Gastrocnemius medialis (tissue), 4 donors: ENCODE measurements at regions of chr10 and their contacts with region 1.

Region 1: GRCh38 chr10:16777473-16778370 is 39.5 kb downstream of the RSU1 start:
- DNase-seq: no peak
- ATAC-seq: peak; percentile 19 to 44
- H3K4me3 ChIP-seq: no peak overlapping the region
- H3K27ac ChIP-seq: peak overlapping the region in 3 of 4 donors; percentile 16 to 50 (median 35)
- H3K4me1 ChIP-seq: peaks cover 17 to 20% of the 10 kb centered on the region in 2 donors
- H3K27me3 ChIP-seq: no peaks in the 10 kb centered on the region
- CTCF ChIP-seq: peak; percentile 47 to 80 (median 62)
- POLR2A ChIP-seq: no peak

Region 2: GRCh38 chr10:15879058-15879457 is 898.7 kb before region 1 on chr10:
- in situ Hi-C with region 1: loop called in 2 of 4 experiments (anchors 25 kb)
- intact Hi-C with region 1: loop called (anchors 5 kb)
- DNase-seq: no peak
- ATAC-seq: no peak
- H3K4me3 ChIP-seq: no peak overlapping the region
- H3K27ac ChIP-seq: no peak overlapping the region
- H3K4me1 ChIP-seq: no peaks in the 10 kb centered on the region
- H3K27me3 ChIP-seq: peaks cover 0 to 7% (median 3%) of the 10 kb centered on the region in 3 donors
- CTCF ChIP-seq: peak in 4 of 5 experiments; percentile 23 to 46 (median 36)
- POLR2A ChIP-seq: no peak

Region 3: GRCh38 chr10:15901889-15902288 is 875.8 kb before region 1 on chr10:
- in situ Hi-C with region 1: loop called (anchors 25 kb)
- intact Hi-C with region 1: loop called (anchors 10 kb)
- DNase-seq: no peak
- ATAC-seq: no peak
- H3K4me3 ChIP-seq: no peak overlapping the region
- H3K27ac ChIP-seq: no peak overlapping the region
- H3K4me1 ChIP-seq: no peaks in the 10 kb centered on the region
- H3K27me3 ChIP-seq: peaks cover 0 to 3% (median 0%) of the 10 kb centered on the region in 3 donors
- CTCF ChIP-seq: no peak
- POLR2A ChIP-seq: no peak